HEK293 (cell line): ENCODE measurements at regions of chr7 and their contacts with region 1.

Region 1: DNA sequence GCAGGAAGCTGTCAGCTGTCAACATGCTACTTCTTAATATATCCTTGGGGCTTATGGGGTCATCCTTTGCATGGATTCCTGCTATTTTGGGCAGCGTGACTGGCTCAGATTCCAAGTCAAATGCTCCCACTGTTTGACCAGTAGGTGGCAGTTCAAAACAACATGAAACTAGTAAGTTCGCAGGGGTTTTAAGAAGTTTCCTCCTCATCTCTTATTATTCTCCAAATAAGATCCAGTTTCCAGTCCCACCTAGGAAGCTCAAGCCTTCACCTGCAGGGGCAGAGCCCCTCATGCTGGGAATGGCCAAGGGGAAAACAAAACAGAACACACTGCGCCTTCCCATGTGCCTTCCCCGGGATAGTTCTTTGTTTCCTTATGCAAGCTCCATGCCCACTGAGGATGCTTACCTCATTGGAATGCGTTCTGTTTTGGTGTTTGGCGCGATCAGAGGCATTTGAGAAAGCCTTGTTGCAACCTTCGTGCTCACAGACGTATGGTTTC is 259.8 kb downstream of the GLI3 start:
- H3K4me3 ChIP-seq: no peak overlapping the region
- H3K27ac ChIP-seq: no peak overlapping the region
- H3K4me1 ChIP-seq: no peaks in the 10 kb centered on the region
- CTCF ChIP-seq: no peak

Region 2: GRCh38 chr7:41955893-41956675 is 21.1 kb before region 1 on chr7:
- CTCF ChIA-PET with region 1: interaction called, 14 read pairs
- POLR2A ChIA-PET with region 1: no interaction called
- H3K4me3 ChIP-seq: no peak overlapping the region
- H3K27ac ChIP-seq: peak overlapping the region; percentile 19; the same call in 1 of the 2 replicates
- H3K4me1 ChIP-seq: peaks cover 11% of the 10 kb centered on the region; the same call in 1 of the 2 replicates
- CTCF ChIP-seq: no peak

Region 3: DNA sequence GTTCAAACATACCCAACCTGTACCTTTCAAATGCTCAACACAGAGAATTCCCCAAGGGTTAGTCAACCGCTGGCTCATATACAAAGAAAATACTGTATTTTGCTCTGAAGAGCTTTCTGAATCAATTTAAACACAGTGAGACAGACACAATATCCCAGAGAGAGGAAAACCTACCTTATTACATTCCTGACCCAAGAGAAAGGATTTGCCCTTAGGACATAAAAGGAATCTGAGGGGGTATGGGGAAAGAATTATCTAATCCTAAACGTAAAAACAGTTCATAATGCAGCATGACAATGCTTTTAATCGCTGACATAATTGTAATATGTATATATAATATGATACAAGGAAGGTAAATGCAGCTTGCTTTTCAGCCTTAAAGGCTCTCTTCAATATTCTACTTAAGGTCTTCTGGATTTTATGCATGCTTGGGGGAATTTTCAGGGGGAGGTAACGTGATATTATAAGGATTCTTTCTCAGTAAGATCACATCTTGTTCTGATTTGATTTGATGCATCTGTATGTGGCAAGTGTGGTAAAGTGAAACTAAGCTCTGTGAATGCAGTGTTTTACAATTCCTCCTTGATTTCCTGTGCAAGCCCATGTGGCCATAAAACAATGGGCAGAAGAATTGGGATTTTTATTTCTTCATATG is 19.3 kb after region 1 on chr7:
- CTCF ChIA-PET with region 1: interaction called, 15 read pairs
- POLR2A ChIA-PET with region 1: no interaction called
- H3K4me3 ChIP-seq: no peak overlapping the region
- H3K27ac ChIP-seq: no peak overlapping the region
- H3K4me1 ChIP-seq: peaks cover 42% of the 10 kb centered on the region
- CTCF ChIP-seq: no peak

Region 4: DNA sequence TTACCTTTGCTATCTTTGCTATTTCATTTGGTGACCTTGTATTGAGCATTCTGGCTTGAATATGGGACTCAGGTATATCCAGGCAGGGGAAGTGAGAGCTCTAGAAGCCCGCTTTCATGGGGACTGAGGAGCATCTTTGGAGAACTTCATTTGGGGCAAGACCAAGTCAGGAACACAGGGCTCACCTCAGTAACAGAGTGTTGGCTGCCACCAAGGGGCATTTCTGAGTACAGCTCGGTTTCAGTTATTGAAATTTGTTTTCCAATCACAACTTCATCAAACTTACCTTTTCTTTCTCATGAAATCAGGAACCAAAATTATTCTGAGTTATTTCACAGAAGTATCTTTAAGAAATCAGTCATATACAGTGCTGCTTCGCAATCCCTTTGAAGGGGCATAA is 597.5 kb after region 1 on chr7:
- CTCF ChIA-PET with region 1: interaction called, 12 read pairs
- POLR2A ChIA-PET with region 1: no interaction called
- H3K4me3 ChIP-seq: no peak overlapping the region
- H3K27ac ChIP-seq: no peak overlapping the region
- H3K4me1 ChIP-seq: peaks cover 5% of the 10 kb centered on the region
- CTCF ChIP-seq: peak; percentile 40; the same call in 1 of the 2 replicates

Region 5: GRCh38 chr7:42690794-42691639 is 713.8 kb after region 1 on chr7:
- CTCF ChIA-PET with region 1: interaction called, 18 read pairs
- POLR2A ChIA-PET with region 1: no interaction called
- H3K4me3 ChIP-seq: no peak overlapping the region
- H3K27ac ChIP-seq: no peak overlapping the region
- H3K4me1 ChIP-seq: no peaks in the 10 kb centered on the region
- CTCF ChIP-seq: peak; percentile 69